Activated B cell treated with CpG ODN at 0.5 μM for 24 hours (primary cell): ENCODE measurements at regions of chr4 and their contacts with region 1.

Region 1: DNA sequence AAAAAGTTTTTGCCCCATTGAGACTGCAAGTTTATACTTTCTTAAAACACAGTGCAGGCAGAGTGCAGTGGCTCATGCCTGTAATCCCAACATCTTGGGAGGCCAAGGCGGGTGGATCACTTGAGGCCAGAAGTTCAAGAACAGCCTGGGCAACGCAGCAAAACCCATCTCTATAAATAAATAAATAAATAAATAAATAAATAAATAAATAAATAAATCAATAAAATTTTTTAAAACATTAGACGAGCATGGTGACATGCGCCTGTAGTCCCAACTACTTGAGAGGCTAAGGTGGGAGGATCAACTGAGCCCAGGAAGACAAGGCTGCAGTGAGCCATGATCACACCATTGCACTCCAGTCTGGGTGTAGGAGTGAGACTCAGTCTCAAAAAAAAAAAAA is 213.3 kb downstream of the LRBA start:
- DNase-seq: no peak
- ATAC-seq: no peak
- H3K4me3 Mint-ChIP-seq: no peak overlapping the region
- H3K27ac Mint-ChIP-seq: no peak overlapping the region
- H3K4me1 Mint-ChIP-seq: no peaks in the 10 kb centered on the region
- H3K27me3 Mint-ChIP-seq: no peaks in the 10 kb centered on the region
- CTCF ChIP-seq: no peak

Region 2: GRCh38 chr4:149102765-149103164 is 1699.1 kb before region 1 on chr4:
- CTCF ChIA-PET with region 1: no interaction called
- POLR2A ChIA-PET with region 1: no interaction called
- intact Hi-C with region 1: no loop called
- DNase-seq: no peak
- ATAC-seq: no peak
- H3K4me3 Mint-ChIP-seq: no peak overlapping the region
- H3K27ac Mint-ChIP-seq: no peak overlapping the region
- H3K4me1 Mint-ChIP-seq: no peaks in the 10 kb centered on the region
- H3K27me3 Mint-ChIP-seq: no peaks in the 10 kb centered on the region
- CTCF ChIP-seq: no peak

Region 3: DNA sequence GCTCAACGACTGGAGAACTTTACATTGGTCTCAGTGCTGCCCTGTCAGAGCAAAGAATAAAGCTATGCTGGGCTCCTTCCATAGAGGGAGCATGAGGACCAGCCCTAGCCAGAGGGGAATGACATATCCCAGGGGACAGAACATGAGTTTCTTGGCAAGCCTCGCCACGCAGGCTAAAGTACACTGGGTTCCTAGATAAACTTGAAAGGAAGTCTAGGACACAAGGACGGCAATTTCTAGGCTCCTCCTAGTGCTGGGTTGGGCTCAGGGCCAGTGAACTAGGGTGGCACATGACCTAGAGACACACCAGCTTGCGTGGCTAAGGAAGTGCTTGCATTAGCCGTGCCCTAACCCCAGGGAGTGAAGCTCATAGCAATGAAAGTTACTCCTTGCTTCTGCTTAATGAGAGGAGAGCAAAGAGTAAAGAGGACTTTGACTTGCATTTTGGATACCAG is 78.9 kb before region 1 on chr4:
- CTCF ChIA-PET with region 1: no interaction called
- POLR2A ChIA-PET with region 1: no interaction called
- intact Hi-C with region 1: no loop called
- DNase-seq: no peak
- ATAC-seq: no peak
- H3K4me3 Mint-ChIP-seq: no peak overlapping the region
- H3K27ac Mint-ChIP-seq: no peak overlapping the region
- H3K4me1 Mint-ChIP-seq: no peaks in the 10 kb centered on the region
- H3K27me3 Mint-ChIP-seq: no peaks in the 10 kb centered on the region
- CTCF ChIP-seq: no peak

Region 4: DNA sequence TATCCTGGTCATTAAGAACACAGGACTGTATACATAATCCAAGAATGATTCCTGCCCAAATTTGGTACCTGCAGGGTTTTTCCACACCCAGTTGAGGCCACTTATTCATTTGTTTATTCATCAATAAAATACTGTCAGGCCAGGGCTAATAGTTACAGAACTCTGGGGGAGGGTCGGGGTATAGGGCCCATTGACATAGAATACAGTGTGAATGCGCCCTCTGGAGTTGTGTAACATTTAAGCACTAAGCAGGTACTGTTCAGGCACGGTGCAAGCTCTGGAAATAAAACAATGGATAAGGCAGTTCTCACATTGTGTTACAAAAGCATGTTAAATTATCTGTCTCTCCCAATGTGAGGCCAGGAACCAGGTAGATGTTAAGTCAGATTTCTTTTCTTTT is 244.1 kb after region 1 on chr4:
- CTCF ChIA-PET with region 1: no interaction called
- POLR2A ChIA-PET with region 1: interaction called, 10 read pairs
- intact Hi-C with region 1: no loop called
- DNase-seq: no peak
- ATAC-seq: no peak
- H3K4me3 Mint-ChIP-seq: no peak overlapping the region
- H3K27ac Mint-ChIP-seq: no peak overlapping the region
- H3K4me1 Mint-ChIP-seq: no peaks in the 10 kb centered on the region
- H3K27me3 Mint-ChIP-seq: no peaks in the 10 kb centered on the region
- CTCF ChIP-seq: no peak